ENCODE measurements at regions of chr16 and their contacts with region 1.

Region 1: DNA sequence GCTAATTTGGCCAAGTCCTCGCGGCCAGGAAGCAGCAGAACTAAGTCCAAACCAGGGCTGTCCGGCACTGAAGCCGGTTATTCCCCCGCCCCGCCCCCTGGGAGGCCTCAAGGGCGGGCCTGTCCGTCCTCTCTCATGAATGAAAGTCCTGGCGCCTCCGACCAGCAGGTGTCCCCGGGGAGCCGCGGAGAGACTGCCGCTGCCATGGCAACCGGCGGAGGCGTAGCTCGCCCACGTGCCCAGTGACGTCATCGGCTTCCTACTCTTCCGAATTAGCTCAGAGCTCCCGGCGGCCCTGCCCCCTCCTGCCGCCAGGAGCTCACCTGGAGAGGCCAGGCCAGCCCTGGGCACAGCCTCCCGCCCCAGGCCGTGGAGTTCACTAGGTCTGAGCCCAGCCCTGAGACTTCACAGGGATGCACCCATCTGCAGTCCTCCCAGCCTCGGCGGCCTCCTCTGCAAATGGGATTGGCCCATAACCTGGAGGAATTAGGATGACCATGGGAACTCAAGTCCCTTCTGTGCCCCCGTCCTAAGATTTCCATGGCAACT is 1.3 kb downstream of the SPATA2L start:
- DNase-seq: peak; percentile 98
- H3K4me3 Mint-ChIP-seq: peak overlapping the region; percentile 75
- H3K27ac Mint-ChIP-seq: no peak overlapping the region
- H3K4me1 Mint-ChIP-seq: peaks cover 20% of the 10 kb centered on the region
- H3K27me3 Mint-ChIP-seq: no peaks in the 10 kb centered on the region

Region 2: DNA sequence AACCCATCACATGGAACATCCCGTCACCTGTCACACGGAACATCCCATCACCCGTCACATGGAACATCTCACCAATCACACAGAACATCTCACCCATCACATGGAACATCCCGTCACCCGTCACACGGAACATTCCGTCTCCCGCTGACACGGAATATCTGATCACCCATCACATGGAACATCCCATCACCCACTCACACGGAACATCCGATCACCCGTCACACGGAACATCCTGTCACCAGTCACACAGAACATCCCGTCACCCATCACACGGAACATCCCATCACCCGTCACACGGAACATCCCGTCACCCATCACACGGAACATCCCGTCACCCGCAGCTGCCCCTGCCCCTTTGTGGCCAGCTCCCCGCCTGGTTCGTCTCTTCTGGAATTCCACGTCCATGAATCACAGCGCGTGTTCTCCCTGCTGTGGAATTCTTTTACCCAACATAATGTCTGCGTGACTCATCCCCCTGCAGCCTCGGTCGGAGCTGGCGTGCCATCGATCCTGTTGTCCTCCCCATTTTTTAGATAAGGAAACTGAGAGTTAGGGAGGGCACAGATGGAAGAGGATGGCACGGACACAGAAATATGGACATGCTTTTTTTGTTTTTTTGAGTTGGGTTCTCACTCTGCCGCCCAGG is 119.0 kb before region 1 on chr16:
- CTCF ChIA-PET with region 1: no interaction called
- intact Hi-C with region 1: no loop called
- DNase-seq: no peak
- H3K4me3 Mint-ChIP-seq: no peak overlapping the region
- H3K27ac Mint-ChIP-seq: no peak overlapping the region
- H3K4me1 Mint-ChIP-seq: no peaks in the 10 kb centered on the region
- H3K27me3 Mint-ChIP-seq: no peaks in the 10 kb centered on the region

Region 3: GRCh38 chr16:89657442-89658220 is 42.5 kb before region 1 on chr16 and contains the starts of genes CHMP1A and SPATA33:
- CTCF ChIA-PET with region 1: interaction called, 6 read pairs
- intact Hi-C with region 1: loop called (anchors 1 kb)
- DNase-seq: peak; percentile 92
- H3K4me3 Mint-ChIP-seq: peak within 1 kb of the TSS; percentile 91
- H3K27ac Mint-ChIP-seq: peak within 1 kb of the TSS; percentile 77
- H3K4me1 Mint-ChIP-seq: peaks cover 32% of the 10 kb centered on the region
- H3K27me3 Mint-ChIP-seq: no peaks in the 10 kb centered on the region
- total RNA-seq, gene CHMP1A: 46.8 to 48.4 TPM
- total RNA-seq, gene SPATA33: 6.5 to 7.0 TPM

Region 4: DNA sequence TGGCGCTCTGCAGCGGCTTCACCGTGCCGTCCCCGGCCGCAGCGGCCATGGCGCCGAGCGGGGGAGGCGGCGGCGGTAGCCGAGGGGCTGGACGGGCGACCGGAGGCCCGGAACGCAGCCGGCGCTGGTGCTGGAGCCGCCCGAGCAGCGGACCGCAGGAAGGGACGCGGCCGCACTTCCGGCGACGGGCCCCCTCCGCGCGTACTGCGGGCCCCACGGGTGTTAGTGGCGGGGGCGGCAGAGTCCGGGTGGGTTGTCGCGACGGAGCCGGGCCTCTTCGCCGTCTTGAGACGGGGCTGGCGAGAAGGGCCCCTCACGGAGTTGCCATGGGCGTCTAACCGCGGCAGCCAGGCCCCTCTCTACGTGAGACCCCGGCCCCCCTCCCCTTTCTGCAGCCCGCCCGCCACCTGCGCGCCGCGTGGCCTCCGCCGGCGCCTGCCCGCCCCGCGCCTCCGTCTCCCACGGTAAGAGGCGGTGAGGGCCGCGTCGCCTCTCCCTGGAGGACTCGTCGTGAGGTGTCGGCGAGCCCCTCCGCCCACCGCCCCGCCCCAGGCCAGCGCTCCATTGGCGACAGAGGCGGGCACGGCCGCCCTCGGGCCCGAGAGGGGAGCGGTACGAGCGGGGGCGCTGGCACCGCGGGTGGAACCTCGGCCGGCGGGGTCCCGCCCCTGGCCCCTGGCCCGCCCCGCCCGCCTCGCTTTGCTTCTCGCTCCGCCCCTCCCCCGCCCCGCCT is 20.8 kb after region 1 on chr16 and contains the starts of genes VPS9D1 and ZNF276:
- CTCF ChIA-PET with region 1: interaction called, 20 read pairs
- intact Hi-C with region 1: loop called (anchors 1 kb)
- DNase-seq: peak; percentile 84
- H3K4me3 Mint-ChIP-seq: peak within 1 kb of the TSS; percentile 77
- H3K27ac Mint-ChIP-seq: peak within 1 kb of the TSS; percentile 85
- H3K4me1 Mint-ChIP-seq: peaks cover 43% of the 10 kb centered on the region
- H3K27me3 Mint-ChIP-seq: no peaks in the 10 kb centered on the region
- total RNA-seq, gene VPS9D1: 0.91 to 1.4 TPM
- total RNA-seq, gene ZNF276: 19.8 to 25.3 TPM

Region 5: GRCh38 chr16:89795676-89796075 is 95.5 kb after region 1 on chr16:
- CTCF ChIA-PET with region 1: interaction called, 38 read pairs
- intact Hi-C with region 1: no loop called
- DNase-seq: no peak
- H3K4me3 Mint-ChIP-seq: no peak overlapping the region
- H3K27ac Mint-ChIP-seq: no peak overlapping the region
- H3K4me1 Mint-ChIP-seq: no peaks in the 10 kb centered on the region
- H3K27me3 Mint-ChIP-seq: no peaks in the 10 kb centered on the region

Region 6: DNA sequence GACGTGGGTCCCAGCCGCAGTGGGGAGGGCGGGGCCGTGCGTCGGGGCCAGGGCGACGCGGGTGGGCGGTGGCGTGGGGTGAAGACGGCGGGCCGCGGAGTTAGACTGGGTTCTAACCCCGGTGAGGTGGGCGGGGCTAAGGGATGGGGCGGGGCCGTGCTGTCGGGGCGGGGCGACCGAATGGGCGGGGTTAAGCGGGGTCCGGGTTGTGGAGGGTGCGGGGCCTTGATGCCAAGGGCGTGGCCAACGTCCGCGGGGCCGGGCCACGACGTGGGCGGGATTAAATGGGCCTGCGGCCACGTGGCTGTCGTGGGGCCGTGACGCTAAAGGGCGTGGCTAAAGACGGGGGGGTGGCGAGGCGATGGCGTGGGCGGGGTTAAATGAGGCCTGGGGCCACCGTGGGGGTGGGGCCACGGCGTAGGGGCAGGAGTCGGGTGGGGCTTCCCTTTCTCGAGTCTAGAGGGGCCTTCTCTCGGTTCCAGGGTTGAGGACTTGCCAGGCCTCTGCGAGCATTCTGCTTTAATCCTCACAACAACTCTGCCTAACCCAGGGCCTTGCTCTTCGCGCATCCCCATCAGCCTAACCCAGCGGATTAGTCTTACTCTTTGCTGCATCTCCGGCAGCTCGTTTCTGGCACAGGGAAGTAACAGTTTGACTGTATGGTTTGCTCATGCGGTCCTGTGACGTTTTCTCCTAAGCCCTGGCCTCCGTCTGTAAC is 174.0 kb after region 1 on chr16:
- CTCF ChIA-PET with region 1: interaction called, 5 read pairs
- intact Hi-C with region 1: loop called (anchors 1 kb)
- DNase-seq: peak; percentile 95
- H3K4me3 Mint-ChIP-seq: peak overlapping the region; percentile 91
- H3K27ac Mint-ChIP-seq: peak overlapping the region; percentile 95
- H3K4me1 Mint-ChIP-seq: peaks cover 13% of the 10 kb centered on the region
- H3K27me3 Mint-ChIP-seq: no peaks in the 10 kb centered on the region

Measured in activated naive CD4-positive, alpha-beta T cell treated with anti-CD3 and anti-CD28 coated beads for 36 hours (primary cell).